ENCODE measurements at regions of chr5 and their contacts with region 1.

Region 1: GRCh38 chr5:141923448-141924352 is at the start of gene DELE1:
- DNase-seq: peak; percentile 94
- H3K4me3 Mint-ChIP-seq: peak within 1 kb of the TSS; percentile 84
- H3K27ac Mint-ChIP-seq: peak within 1 kb of the TSS; percentile 83
- H3K4me1 Mint-ChIP-seq: peaks cover 39% of the 10 kb centered on the region
- H3K27me3 Mint-ChIP-seq: no peaks in the 10 kb centered on the region
- total RNA-seq, gene DELE1: 73.4 to 80.7 TPM

Region 2: GRCh38 chr5:141681695-141682641 is 241.7 kb before region 1 on chr5 and contains the start of gene ARAP3:
- CTCF ChIA-PET with region 1: no interaction called
- POLR2A ChIA-PET with region 1: no interaction called
- DNase-seq: peak; percentile 54
- H3K4me3 Mint-ChIP-seq: peak within 1 kb of the TSS; percentile 79
- H3K27ac Mint-ChIP-seq: peak within 1 kb of the TSS; percentile 70
- H3K4me1 Mint-ChIP-seq: peaks cover 41% of the 10 kb centered on the region
- H3K27me3 Mint-ChIP-seq: peaks cover 5% of the 10 kb centered on the region
- total RNA-seq, gene ARAP3: 13.6 to 13.9 TPM

Region 3: GRCh38 chr5:141849375-141850243 is 74.1 kb before region 1 on chr5:
- CTCF ChIA-PET with region 1: no interaction called
- POLR2A ChIA-PET with region 1: interaction called, 16 read pairs
- DNase-seq: peak; percentile 81
- H3K4me3 Mint-ChIP-seq: peak overlapping the region; percentile 80
- H3K27ac Mint-ChIP-seq: peak overlapping the region; percentile 84
- H3K4me1 Mint-ChIP-seq: peaks cover 21% of the 10 kb centered on the region
- H3K27me3 Mint-ChIP-seq: peaks cover 10% of the 10 kb centered on the region

Region 4: DNA sequence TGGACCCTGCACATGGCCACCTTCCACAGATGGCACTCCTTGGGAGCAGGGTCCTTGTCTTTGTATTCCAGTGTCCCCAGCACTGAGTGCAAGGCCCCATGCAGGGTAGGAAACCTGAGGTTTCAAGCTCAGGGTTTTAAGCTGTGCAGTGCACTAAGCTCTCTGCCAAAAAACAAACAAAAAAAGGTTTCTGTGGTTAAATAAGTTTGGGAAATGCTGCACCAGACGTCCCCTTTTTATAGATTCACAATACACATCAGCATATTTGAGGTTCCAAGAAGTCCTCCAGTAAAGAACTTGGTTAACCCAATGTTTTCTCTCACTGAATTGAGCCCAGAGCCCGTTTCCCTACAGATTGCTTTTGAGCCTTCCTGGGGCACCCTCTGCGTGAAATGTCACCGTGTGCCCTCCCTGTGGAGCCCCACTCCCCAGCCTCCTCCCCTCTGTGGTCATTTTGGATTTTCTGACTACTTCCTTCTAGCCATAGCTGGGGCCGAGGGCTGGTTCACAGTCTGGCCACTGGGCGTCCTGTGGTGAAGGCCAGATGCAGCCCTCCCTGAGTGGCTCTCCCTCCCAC is 17.1 kb after region 1 on chr5:
- CTCF ChIA-PET with region 1: interaction called, 4 read pairs
- POLR2A ChIA-PET with region 1: interaction called, 11 read pairs
- DNase-seq: no peak
- H3K4me3 Mint-ChIP-seq: no peak overlapping the region
- H3K27ac Mint-ChIP-seq: peak overlapping the region; percentile 52
- H3K4me1 Mint-ChIP-seq: peaks cover 23% of the 10 kb centered on the region
- H3K27me3 Mint-ChIP-seq: no peaks in the 10 kb centered on the region